Posterior vena cava (tissue), 2 donors: ENCODE measurements at regions of chr10 and their contacts with region 1.

Region 1: GRCh38 chr10:114304017-114304570 is 65.0 kb downstream of the VWA2 start:
- DNase-seq: peak; percentile 89

Region 2: GRCh38 chr10:114367041-114367818 is 63.1 kb after region 1 on chr10:
- intact Hi-C with region 1: no loop called
- DNase-seq: no peak

Region 3: GRCh38 chr10:114437456-114438292 is 133.6 kb after region 1 on chr10:
- intact Hi-C with region 1: loop called (anchors 10 kb)
- DNase-seq: no peak